Common myeloid progenitor, CD34-positive (primary cell): ENCODE measurements at regions of chr17 and their contacts with region 1.

Region 1: GRCh38 chr17:45428050-45428617 is 4.5 kb downstream of the ARHGAP27 start:
- DNase-seq: peak; percentile 90 to 97 (median 97)
- H3K4me3 ChIP-seq: peak overlapping the region in 5 of 7 experiments; percentile 32 to 59 (median 53)
- H3K27ac ChIP-seq: peak overlapping the region; percentile 40 to 63
- H3K4me1 ChIP-seq: peaks cover 6 to 89% (median 71%) of the 10 kb centered on the region in 4 experiments
- H3K27me3 ChIP-seq: no peaks in the 10 kb centered on the region

Region 2: GRCh38 chr17:45410144-45411091 is 17.7 kb before region 1 on chr17:
- CTCF ChIA-PET with region 1: interaction called, 45 read pairs
- POLR2A ChIA-PET with region 1: interaction called, 3 read pairs
- DNase-seq: peak in 2 of 3 donors; percentile 74 to 84
- H3K4me3 ChIP-seq: peak overlapping the region; percentile 43 to 94 (median 74)
- H3K27ac ChIP-seq: peak overlapping the region; percentile 72 to 78
- H3K4me1 ChIP-seq: peaks cover 17 to 90% (median 77%) of the 10 kb centered on the region in 4 experiments
- H3K27me3 ChIP-seq: no peaks in the 10 kb centered on the region

Region 3: GRCh38 chr17:45628019-45628418 is 199.9 kb after region 1 on chr17:
- CTCF ChIA-PET with region 1: no interaction called
- POLR2A ChIA-PET with region 1: no interaction called
- DNase-seq: no peak
- H3K4me3 ChIP-seq: no peak overlapping the region
- H3K27ac ChIP-seq: no peak overlapping the region
- H3K4me1 ChIP-seq: no peaks in the 10 kb centered on the region
- H3K27me3 ChIP-seq: no peaks in the 10 kb centered on the region